ENCODE measurements at regions of chr3 and their contacts with region 1.

Region 1: DNA sequence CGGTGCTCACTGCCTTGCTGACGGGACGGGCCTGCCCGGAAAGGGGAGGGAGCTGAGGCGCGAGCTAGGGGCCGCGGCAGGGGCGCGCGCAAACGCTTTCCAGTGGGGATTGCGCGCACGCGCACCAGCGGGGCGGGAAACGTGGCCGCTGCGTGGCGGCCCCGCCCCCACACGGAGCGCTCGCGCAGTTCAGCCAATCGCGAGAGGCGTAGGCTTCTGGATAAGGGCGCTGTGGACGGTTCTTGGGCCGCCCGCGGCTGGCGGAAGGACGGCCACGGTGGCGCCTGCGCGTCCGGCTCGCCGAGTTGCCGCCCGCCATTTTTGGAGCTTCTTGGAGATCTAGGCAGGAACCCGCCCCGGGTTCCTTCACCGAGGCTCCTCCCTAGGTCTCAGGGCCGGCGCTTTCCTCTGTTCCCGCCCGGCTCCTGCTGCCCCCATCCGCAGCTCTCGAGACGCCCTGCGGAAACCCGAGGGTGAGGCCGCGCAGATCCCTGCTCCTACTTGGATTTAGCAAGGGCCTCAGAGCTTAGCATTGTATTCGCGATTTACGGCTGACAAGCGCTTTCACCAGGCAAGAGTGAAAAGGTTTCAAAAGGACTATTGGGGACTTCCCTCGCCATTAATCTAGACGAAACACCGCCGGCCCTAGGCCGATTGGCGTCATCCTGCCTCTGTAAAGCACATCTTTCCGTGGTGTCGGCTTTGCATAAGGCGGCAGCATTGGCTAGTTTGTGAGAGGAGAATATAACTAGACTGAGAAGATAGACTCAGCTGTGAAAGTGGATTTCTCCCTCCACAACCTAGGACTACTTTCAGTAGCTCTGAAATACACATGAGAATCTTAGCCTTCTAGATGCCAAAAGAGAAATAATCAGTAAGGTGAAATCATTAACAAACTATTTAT is 496 bp upstream of the STAG1 start:
- DNase-seq: peak; percentile 90
- H3K4me3 ChIP-seq: peak overlapping the region; percentile 81
- H3K27me3 ChIP-seq: no peaks in the 10 kb centered on the region
- CTCF ChIP-seq: peak; percentile 41

Region 2: GRCh38 chr3:136075218-136075808 is 677.4 kb before region 1 on chr3:
- CTCF ChIA-PET with region 1: interaction called, 29 read pairs
- POLR2A ChIA-PET with region 1: interaction called, 6 read pairs
- DNase-seq: no peak
- H3K4me3 ChIP-seq: no peak overlapping the region
- H3K27me3 ChIP-seq: no peaks in the 10 kb centered on the region
- CTCF ChIP-seq: peak; percentile 84

Region 3: GRCh38 chr3:136270179-136270578 is 482.5 kb before region 1 on chr3:
- CTCF ChIA-PET with region 1: no interaction called
- POLR2A ChIA-PET with region 1: interaction called, 10 read pairs
- DNase-seq: no peak
- H3K4me3 ChIP-seq: no peak overlapping the region
- H3K27me3 ChIP-seq: no peaks in the 10 kb centered on the region
- CTCF ChIP-seq: no peak

Region 4: GRCh38 chr3:136350132-136350531 is 402.5 kb before region 1 on chr3:
- CTCF ChIA-PET with region 1: interaction called, 14 read pairs
- POLR2A ChIA-PET with region 1: no interaction called
- DNase-seq: peak; percentile 80
- H3K4me3 ChIP-seq: no peak overlapping the region
- H3K27me3 ChIP-seq: no peaks in the 10 kb centered on the region
- CTCF ChIP-seq: no peak

Region 5: GRCh38 chr3:136658946-136659682 is 93.6 kb before region 1 on chr3:
- CTCF ChIA-PET with region 1: interaction called, 3 read pairs
- POLR2A ChIA-PET with region 1: interaction called, 10 read pairs
- DNase-seq: peak; percentile 39
- H3K4me3 ChIP-seq: no peak overlapping the region
- H3K27me3 ChIP-seq: no peaks in the 10 kb centered on the region
- CTCF ChIP-seq: no peak

Region 6: DNA sequence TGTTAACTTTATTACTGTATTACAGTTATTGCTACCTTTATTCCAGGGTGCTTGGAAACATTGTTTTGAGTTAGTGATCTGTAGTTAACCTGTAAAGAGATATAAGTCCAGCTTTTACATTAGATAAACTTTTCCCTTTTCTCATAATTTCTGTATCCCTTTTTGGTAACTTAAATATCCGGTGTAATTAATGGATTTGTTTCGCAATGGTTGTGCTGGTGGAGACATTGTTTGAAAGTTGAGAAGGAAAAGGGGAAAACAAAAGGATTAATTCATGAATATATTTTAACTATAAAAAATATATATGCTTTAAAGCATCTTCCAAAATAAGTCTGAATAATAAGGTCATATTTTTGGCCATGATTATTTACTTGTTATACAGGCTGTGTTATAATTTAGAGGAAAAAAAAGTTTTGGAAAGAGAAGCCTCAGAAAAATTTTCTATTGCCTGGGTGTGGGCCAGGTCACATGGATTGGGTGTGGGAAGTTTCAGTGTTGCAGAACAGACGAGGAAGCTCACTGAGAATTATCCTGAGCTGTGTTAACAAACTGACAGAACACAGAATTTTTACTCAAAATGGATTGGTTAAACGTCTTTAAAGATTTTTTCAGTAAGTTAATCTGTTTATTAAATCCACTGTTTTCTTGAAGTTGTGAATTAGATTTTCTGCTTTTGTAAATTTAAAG is 177.5 kb after region 1 on chr3:
- CTCF ChIA-PET with region 1: no interaction called
- POLR2A ChIA-PET with region 1: no interaction called
- DNase-seq: no peak
- H3K4me3 ChIP-seq: no peak overlapping the region
- H3K27me3 ChIP-seq: no peaks in the 10 kb centered on the region
- CTCF ChIP-seq: no peak

Region 7: GRCh38 chr3:137013955-137014688 is 261.4 kb after region 1 on chr3:
- CTCF ChIA-PET with region 1: interaction called, 55 read pairs
- POLR2A ChIA-PET with region 1: interaction called, 19 read pairs
- DNase-seq: no peak
- H3K4me3 ChIP-seq: peak overlapping the region; percentile 38
- H3K27me3 ChIP-seq: no peaks in the 10 kb centered on the region
- CTCF ChIP-seq: peak; percentile 75